ENCODE measurements at regions of chr7 and their contacts with region 1.

Region 1: GRCh38 chr7:25669961-25670841 is 441.9 kb upstream of the NPVF start:
- DNase-seq: no peak
- H3K4me3 ChIP-seq: no peak overlapping the region
- H3K27ac ChIP-seq: peak overlapping the region in 1 of 2 experiments; percentile 68; a peak in 2 of 4 replicates
- H3K4me1 ChIP-seq: peaks cover 0 to 45% of the 10 kb centered on the region in 2 experiments; a peak in 2 of 4 replicates
- H3K27me3 ChIP-seq: no peaks in the 10 kb centered on the region
- CTCF ChIP-seq: no peak
- EP300 ChIP-seq: no peak
- RAD21 ChIP-seq: no peak

Region 2: DNA sequence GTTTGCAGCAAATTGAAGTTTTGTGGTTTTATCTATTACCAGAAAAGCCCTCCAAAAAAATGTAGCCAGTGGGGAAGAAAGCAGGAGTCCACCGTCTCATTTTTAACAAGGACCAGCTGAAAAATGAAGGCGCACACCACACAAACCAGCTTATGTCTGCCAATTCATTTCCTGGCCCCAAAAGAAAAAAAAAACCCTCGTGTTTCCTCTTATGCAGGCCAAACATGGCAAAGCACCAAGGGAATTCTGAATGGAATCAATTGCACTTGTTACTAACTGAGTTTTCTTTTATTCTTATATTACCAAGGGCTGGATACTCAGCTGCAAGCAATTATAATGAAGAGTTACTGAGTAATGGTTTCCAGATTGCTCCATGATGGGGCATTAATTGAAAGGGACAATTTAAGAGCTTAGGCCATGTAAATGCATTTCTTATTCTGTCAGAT is 13.6 kb before region 1 on chr7:
- CTCF ChIA-PET with region 1: interaction called, 38 read pairs
- POLR2A ChIA-PET with region 1: interaction called, 3 read pairs
- DNase-seq: peak; percentile 34
- H3K4me3 ChIP-seq: no peak overlapping the region
- H3K27ac ChIP-seq: peak overlapping the region in 1 of 2 experiments; percentile 94; a peak in 2 of 4 replicates
- H3K4me1 ChIP-seq: peaks cover 0 to 59% of the 10 kb centered on the region in 2 experiments; a peak in 3 of 4 replicates
- H3K27me3 ChIP-seq: no peaks in the 10 kb centered on the region
- CTCF ChIP-seq: no peak
- EP300 ChIP-seq: peak in 1 of 2 experiments; percentile 92; a peak in 3 of 4 replicates
- RAD21 ChIP-seq: peak; percentile 14; the same call in 1 of the 2 replicates

Region 3: GRCh38 chr7:25707768-25708620 is 37.8 kb after region 1 on chr7:
- CTCF ChIA-PET with region 1: no interaction called
- POLR2A ChIA-PET with region 1: no interaction called
- DNase-seq: peak; percentile 53
- H3K4me3 ChIP-seq: no peak overlapping the region
- H3K27ac ChIP-seq: no peak overlapping the region
- H3K4me1 ChIP-seq: peaks cover 0 to 5% of the 10 kb centered on the region in 2 experiments; a peak in 1 of 4 replicates
- H3K27me3 ChIP-seq: no peaks in the 10 kb centered on the region
- CTCF ChIP-seq: no peak
- EP300 ChIP-seq: no peak
- RAD21 ChIP-seq: peak; percentile 11; the same call in 1 of the 2 replicates

Measured in SK-N-SH (cell line).